ENCODE measurements at regions of chr1 and their contacts with region 1.

Region 1: DNA sequence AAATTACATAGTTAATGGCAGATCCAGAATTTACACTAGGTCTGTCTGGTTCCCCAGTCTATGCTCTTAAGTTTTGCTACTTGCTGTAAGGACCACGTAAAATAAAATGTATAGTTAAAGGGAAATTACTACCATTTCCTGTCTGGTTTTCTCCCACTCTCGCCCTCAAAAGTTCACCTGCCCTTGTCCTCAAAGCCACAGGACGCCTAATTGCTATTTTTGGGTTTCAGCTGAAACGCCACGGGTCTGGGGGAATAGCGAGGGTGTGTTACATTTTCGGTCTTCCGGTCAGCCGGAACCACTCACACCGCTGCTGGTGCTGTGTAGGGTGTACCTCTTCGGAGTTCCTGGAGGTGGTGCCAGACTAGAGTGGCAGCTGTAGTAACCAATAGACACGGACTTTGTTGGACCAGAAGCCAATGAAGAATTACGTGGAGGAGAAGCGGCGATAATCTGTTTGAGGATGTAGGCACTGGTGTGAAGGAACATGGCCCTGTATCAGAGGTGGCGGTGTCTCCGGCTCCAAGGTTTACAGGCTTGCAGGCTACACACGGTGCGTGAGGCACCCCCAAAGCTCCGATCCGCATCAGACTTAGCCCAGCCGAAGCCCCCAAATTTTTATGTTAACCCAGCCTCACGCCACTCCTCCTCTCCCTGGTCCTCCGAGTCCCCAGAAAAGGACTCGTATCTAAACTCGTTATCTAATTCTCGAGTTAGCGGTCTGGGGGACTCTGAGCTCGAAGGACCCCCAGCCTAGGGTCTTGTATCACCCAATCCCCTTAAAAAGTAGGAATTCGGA is at the start of gene TARS2:
- DNase-seq: peak; percentile 93
- ATAC-seq: peak; percentile 100
- total RNA-seq, gene TARS2: 16.3 to 18.5 TPM

Region 2: GRCh38 chr1:150473659-150474058 is 13.5 kb before region 1 on chr1:
- intact Hi-C with region 1: loop called in 1 of 2 experiments (anchors 2 kb)
- DNase-seq: peak; percentile 41
- ATAC-seq: peak; percentile 44 to 68

Region 3: DNA sequence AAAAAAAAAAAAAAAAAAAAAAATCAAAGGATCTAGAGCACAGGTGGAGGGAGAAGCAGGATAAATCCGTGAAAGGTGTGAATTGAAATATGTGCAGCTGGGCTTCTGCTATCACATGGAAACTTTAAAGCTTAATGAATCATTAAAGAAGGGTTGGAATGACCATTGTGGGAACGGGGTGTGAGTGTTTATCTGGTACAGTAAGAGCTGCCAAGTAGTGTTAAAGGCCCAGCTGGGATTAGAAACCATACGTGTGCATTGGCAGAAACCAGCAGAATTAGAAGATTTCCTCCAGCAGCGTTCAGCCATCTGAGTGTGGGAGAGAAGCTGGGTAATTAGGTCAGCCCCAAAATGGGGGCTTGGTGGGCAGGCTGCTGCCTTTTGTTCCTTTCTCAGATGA is 41.9 kb after region 1 on chr1:
- intact Hi-C with region 1: no loop called
- DNase-seq: no peak
- ATAC-seq: peak in 1 of 2 donors; percentile 49